PC-3 (cell line): ENCODE measurements at regions of chr4 and their contacts with region 1.

Region 1: GRCh38 chr4:38034986-38035882 is 75.0 kb downstream of the PTTG2 start:
- DNase-seq: peak; percentile 67
- ATAC-seq: peak; percentile 63
- H3K4me3 ChIP-seq: no peak overlapping the region
- H3K27ac ChIP-seq: no peak overlapping the region
- H3K4me1 ChIP-seq: peaks cover 2% of the 10 kb centered on the region; the same call in 1 of the 2 replicates
- H3K27me3 ChIP-seq: no peaks in the 10 kb centered on the region
- CTCF ChIP-seq: peak; percentile 71

Region 2: GRCh38 chr4:37826295-37827029 is 208.8 kb before region 1 on chr4 and contains the start of gene PGM2:
- CTCF ChIA-PET with region 1: no interaction called
- POLR2A ChIA-PET with region 1: no interaction called
- intact Hi-C with region 1: loop called (anchors 5 kb)
- DNase-seq: peak; percentile 77
- ATAC-seq: peak; percentile 88
- H3K4me3 ChIP-seq: peak within 1 kb of the TSS; percentile 98
- H3K27ac ChIP-seq: peak within 1 kb of the TSS; percentile 31
- H3K4me1 ChIP-seq: peaks cover 16% of the 10 kb centered on the region
- H3K27me3 ChIP-seq: no peaks in the 10 kb centered on the region
- CTCF ChIP-seq: no peak
- total RNA-seq, gene PGM2: 21.0 and 28.6 TPM in 2 replicates

Region 3: DNA sequence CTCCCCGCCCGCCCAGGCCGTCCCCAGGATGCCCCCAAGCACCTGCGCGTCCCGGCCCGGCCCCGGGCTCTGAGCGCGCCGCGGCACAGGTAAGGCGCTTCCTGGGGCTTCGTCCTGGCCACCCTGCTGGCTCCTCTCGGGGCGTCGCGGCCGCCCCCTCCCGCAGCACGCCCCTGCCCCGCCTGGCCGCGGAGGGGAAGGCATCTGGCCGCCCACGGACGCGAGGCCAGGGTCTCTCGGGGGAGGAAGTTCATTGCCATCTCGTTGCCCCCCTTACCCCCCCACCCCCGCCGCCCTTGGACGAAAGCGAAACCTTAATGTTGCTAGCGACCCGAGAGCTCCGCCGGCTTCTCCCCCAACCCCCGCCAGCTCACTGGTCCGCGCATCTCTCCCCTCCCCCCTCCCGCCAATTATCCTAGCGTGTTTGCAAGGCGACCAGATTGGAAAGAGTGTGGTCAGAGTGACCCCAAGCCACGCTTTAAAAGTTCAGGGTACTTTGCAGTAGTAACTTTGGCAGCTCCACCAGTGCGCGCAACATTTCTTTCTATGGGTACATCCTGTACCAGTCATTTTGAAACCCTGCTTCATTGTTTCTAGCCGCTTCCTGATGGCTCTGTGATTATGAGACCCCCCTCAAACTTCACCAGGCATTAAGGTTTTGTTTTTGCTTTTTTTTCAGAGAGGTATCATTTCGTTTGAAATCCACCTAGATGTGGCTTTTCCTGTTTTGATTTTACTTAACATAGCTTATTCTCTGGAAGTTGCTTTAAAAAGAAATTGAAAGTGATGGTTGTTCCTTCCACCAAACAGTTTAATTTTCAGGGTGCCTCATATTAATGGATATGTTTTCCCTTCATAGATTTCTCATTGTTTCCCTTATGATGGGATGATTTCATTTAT is 143.7 kb before region 1 on chr4:
- CTCF ChIA-PET with region 1: no interaction called
- POLR2A ChIA-PET with region 1: interaction called, 3 read pairs
- intact Hi-C with region 1: loop called (anchors 1 kb)
- DNase-seq: no peak
- ATAC-seq: peak; percentile 40; the same call in 1 of the 2 replicates
- H3K4me3 ChIP-seq: peak overlapping the region; percentile 69
- H3K27ac ChIP-seq: no peak overlapping the region
- H3K4me1 ChIP-seq: no peaks in the 10 kb centered on the region
- H3K27me3 ChIP-seq: no peaks in the 10 kb centered on the region
- CTCF ChIP-seq: no peak

Region 4: DNA sequence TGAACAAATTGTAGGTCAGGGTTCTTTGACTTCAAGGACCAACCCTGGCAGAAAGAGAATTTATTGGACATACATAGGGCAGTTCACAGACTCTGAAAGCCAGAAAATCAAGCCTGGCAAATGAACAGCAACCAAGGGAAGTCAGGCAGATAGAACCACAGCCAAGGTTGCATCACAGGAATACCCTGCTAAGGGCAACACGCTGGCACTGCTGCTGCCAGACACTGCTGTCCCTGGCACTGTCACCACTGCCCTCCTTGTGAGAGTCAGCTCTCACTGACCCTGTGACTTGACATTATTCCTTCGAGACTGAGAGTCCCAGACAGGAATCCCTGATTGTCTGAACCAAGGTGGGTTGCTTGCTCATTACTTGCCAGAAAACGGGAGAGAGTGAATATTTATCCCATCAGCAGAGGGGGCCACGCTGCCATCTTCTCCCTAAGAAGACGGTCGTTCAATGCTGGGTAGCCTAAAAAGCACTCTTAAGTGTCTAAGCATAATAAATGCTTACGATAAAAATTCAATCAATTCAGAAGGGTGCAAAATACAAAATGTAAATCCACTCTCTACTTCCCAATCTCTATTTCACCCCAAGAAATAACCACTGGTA is 98.2 kb before region 1 on chr4:
- CTCF ChIA-PET with region 1: no interaction called
- POLR2A ChIA-PET with region 1: no interaction called
- intact Hi-C with region 1: loop called (anchors 1 kb)
- DNase-seq: no peak
- ATAC-seq: no peak
- H3K4me3 ChIP-seq: no peak overlapping the region
- H3K27ac ChIP-seq: no peak overlapping the region
- H3K4me1 ChIP-seq: no peaks in the 10 kb centered on the region
- H3K27me3 ChIP-seq: no peaks in the 10 kb centered on the region
- CTCF ChIP-seq: no peak

Region 5: GRCh38 chr4:37977471-37978247 is 57.6 kb before region 1 on chr4:
- CTCF ChIA-PET with region 1: interaction called, 6 read pairs
- POLR2A ChIA-PET with region 1: no interaction called
- intact Hi-C with region 1: loop called (anchors 5 kb)
- DNase-seq: peak; percentile 50
- ATAC-seq: peak; percentile 84
- H3K4me3 ChIP-seq: peak overlapping the region; percentile 67
- H3K27ac ChIP-seq: 0 out of 2 replicates have a peak overlapping the region, but pooled peaks have one; percentile 5
- H3K4me1 ChIP-seq: peaks cover 10% of the 10 kb centered on the region
- H3K27me3 ChIP-seq: no peaks in the 10 kb centered on the region
- CTCF ChIP-seq: peak; percentile 57

Region 6: GRCh38 chr4:38046728-38047489 is 11.7 kb after region 1 on chr4:
- CTCF ChIA-PET with region 1: no interaction called
- POLR2A ChIA-PET with region 1: no interaction called
- intact Hi-C with region 1: no loop called
- DNase-seq: no peak
- ATAC-seq: no peak
- H3K4me3 ChIP-seq: no peak overlapping the region
- H3K27ac ChIP-seq: no peak overlapping the region
- H3K4me1 ChIP-seq: peaks cover 30% of the 10 kb centered on the region
- H3K27me3 ChIP-seq: no peaks in the 10 kb centered on the region
- CTCF ChIP-seq: no peak